ENCODE measurements at regions of chr1 and their contacts with region 1.

Region 1: GRCh38 chr1:234065794-234066447 is 161.4 kb downstream of the SLC35F3 start:
- DNase-seq: peak; percentile 42
- ATAC-seq: no peak
- H3K4me3 Mint-ChIP-seq: no peak overlapping the region
- H3K27ac Mint-ChIP-seq: no peak overlapping the region
- H3K4me1 Mint-ChIP-seq: no peaks in the 10 kb centered on the region
- H3K27me3 Mint-ChIP-seq: peaks cover 8% of the 10 kb centered on the region
- CTCF ChIP-seq: no peak

Region 2: GRCh38 chr1:233326811-233327650 is 738.9 kb before region 1 on chr1:
- CTCF ChIA-PET with region 1: no interaction called
- POLR2A ChIA-PET with region 1: no interaction called
- intact Hi-C with region 1: no loop called
- DNase-seq: peak; percentile 93
- ATAC-seq: peak; percentile 96
- H3K4me3 Mint-ChIP-seq: peak overlapping the region; percentile 82
- H3K27ac Mint-ChIP-seq: peak overlapping the region; percentile 53
- H3K4me1 Mint-ChIP-seq: peaks cover 11% of the 10 kb centered on the region
- H3K27me3 Mint-ChIP-seq: no peaks in the 10 kb centered on the region
- CTCF ChIP-seq: no peak

Region 3: DNA sequence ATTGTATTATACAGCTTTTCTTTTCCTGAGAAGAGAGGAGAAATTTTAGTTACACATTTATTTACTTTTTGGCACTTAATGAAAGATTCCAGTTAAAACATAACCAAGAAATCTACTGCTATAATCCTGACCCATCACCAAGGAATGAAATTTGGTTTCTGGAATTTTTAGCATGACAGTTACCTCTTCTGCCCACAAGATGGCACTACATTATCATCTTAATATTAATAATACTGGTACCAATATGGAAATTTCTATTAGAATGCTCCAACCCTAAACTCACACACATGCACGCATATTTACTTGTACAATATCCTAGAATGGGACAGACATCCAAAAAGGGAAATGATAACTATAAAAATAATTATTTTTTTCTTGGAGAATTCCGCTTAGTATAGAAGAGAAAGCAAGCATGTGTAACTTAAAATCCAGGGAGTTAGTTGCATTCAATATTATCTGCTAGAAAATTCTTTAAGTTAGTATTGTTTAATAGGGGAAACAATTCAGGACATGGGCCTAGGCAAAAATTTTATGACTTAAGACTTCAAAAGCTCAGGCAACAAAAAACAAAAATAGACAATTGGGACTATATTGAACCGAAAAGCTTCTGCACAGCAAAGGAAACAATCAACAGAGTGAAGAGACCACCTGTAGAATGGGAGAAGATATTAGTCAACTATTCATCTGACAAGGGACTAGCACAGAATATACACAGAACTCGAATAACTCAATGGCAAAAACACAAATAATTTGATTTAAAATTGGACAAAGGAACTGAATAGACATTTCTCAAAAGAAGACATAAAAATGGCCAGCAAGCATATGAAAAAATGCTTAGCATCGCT is 701.0 kb before region 1 on chr1:
- CTCF ChIA-PET with region 1: interaction called, 4 read pairs
- POLR2A ChIA-PET with region 1: no interaction called
- intact Hi-C with region 1: loop called (anchors 1 kb)
- DNase-seq: no peak
- ATAC-seq: peak; percentile 25
- H3K4me3 Mint-ChIP-seq: no peak overlapping the region
- H3K27ac Mint-ChIP-seq: no peak overlapping the region
- H3K4me1 Mint-ChIP-seq: no peaks in the 10 kb centered on the region
- H3K27me3 Mint-ChIP-seq: no peaks in the 10 kb centered on the region
- CTCF ChIP-seq: peak; percentile 23

Region 4: DNA sequence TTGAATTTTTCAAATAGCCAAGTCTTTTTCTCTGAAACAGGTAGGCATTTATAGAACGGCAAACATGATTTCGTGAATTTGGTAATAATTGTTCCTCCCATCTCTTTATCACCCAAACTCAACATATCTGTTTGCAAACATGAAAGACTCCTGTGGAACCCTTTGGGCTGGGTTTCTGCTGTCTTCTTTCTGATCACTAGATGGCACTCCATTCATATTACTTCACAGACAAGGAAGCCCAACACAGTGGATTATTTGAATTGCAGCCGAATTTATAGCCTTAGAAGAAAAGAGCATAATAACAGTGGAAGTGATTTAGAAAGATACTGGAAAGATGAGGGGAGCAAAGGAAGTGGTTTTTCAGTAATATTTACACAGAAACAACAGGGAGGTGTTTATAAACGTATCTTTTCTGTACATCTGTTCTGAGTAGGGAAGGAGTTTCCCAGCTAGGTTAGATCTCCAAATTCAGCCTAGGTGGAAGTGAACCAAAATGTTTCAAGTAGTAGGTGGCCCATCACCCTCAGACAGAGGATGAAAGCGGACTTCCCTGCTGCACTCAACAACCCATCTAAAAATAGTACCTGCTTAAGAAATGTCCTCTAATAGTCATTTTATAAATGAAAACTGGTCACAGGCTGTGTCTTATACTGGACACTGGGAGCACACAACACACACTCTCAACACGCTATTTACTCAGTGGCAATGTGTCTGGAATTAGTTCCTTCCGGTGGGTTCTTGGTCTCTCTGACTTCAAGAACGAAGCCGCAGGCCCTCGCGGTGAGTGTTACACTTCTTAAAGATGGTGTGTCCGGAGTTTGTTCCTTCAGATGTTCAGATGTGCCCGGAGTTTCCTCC is 670.8 kb before region 1 on chr1:
- CTCF ChIA-PET with region 1: interaction called, 4 read pairs
- POLR2A ChIA-PET with region 1: no interaction called
- intact Hi-C with region 1: loop called (anchors 1 kb)
- DNase-seq: no peak
- ATAC-seq: no peak
- H3K4me3 Mint-ChIP-seq: no peak overlapping the region
- H3K27ac Mint-ChIP-seq: no peak overlapping the region
- H3K4me1 Mint-ChIP-seq: no peaks in the 10 kb centered on the region
- H3K27me3 Mint-ChIP-seq: peaks cover 16% of the 10 kb centered on the region
- CTCF ChIP-seq: peak; percentile 31

Region 5: DNA sequence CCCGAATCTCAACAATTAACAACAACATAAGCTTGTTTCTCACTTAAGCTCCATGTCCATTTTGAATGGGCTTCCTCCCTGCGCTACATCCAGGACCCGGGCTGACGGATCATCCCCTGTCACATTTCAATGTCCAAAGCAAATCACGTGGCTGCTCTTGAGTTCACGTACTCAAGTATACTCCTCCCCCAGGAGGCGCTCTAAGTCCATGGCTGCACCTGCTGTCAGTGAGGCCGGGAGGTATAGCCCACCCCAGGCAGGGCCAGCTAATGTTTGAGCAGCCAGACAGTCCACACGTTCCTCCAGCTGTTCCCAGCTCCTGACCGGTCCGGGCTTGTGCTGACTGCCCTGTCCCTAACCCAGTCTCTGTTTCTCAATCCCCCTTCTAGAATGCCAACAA is 59.4 kb after region 1 on chr1:
- CTCF ChIA-PET with region 1: no interaction called
- POLR2A ChIA-PET with region 1: no interaction called
- intact Hi-C with region 1: no loop called
- DNase-seq: no peak
- ATAC-seq: no peak
- H3K4me3 Mint-ChIP-seq: no peak overlapping the region
- H3K27ac Mint-ChIP-seq: no peak overlapping the region
- H3K4me1 Mint-ChIP-seq: no peaks in the 10 kb centered on the region
- H3K27me3 Mint-ChIP-seq: peaks cover 23% of the 10 kb centered on the region
- CTCF ChIP-seq: no peak

Measured in activated B cell treated with CpG ODN at 0.5 μM for 24 hours (primary cell).